Esophagus muscularis mucosa (tissue), 4 donors: ENCODE measurements at regions of chr3 and their contacts with region 1.

Region 1: GRCh38 chr3:141201122-141201521 is 30.5 kb upstream of the PXYLP1 start:
- DNase-seq: peak; percentile 50
- H3K4me3 ChIP-seq: no peak overlapping the region
- H3K27ac ChIP-seq: no peak overlapping the region
- H3K4me1 ChIP-seq: no peaks in the 10 kb centered on the region
- H3K27me3 ChIP-seq: no peaks in the 10 kb centered on the region
- CTCF ChIP-seq: no peak
- EP300 ChIP-seq: no peak
- POLR2A ChIP-seq: no peak

Region 2: GRCh38 chr3:141006344-141006743 is 194.8 kb before region 1 on chr3:
- intact Hi-C with region 1: loop called (anchors 2 kb)
- DNase-seq: no peak
- H3K4me3 ChIP-seq: no peak overlapping the region
- H3K27ac ChIP-seq: no peak overlapping the region
- H3K4me1 ChIP-seq: peaks cover 0 to 4% (median 2%) of the 10 kb centered on the region in 4 donors
- H3K27me3 ChIP-seq: no peaks in the 10 kb centered on the region
- CTCF ChIP-seq: no peak
- EP300 ChIP-seq: no peak
- POLR2A ChIP-seq: no peak

Region 3: DNA sequence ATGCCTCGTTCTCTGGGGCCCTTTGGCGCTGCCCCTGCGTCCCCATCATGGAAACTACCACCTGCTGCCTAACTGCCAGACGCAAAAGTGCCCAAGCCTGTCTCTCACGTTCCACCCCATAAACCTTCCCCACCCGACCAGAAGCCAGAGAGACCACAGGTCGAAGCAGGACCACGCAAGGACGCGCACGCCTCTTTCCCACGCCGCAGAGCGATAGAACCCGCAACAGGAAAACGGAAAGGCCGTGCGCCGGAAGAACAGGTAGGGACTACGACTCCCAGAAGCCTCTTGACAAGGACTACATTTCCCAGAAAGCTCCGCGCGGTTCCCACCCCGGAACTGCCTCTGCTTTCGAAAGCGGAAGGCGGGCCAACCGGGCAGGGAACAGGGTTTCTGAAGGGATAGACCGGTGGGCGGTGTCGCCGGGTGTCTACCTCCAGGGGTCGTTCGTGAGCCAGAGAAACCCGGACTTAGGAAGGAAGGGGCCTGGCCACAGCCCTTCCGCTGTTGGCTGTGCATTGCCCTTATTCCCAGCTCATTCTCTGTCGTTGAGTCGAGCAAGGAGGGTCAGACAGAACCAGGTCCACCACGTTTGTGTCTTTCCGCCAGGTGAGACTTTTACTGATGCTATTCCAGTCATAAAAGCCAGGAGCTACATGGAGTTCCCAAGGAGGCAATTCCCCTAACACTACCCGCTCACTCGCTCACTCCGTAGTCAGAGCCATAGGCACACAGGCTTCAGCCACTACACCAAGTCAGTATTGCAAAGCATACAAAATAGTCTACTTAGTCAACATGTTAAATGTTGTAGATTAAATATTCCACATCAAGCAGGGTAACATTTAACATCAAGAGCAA is 110.6 kb after region 1 on chr3:
- intact Hi-C with region 1: no loop called
- DNase-seq: peak; percentile 99
- H3K4me3 ChIP-seq: peak overlapping the region; percentile 65 to 73 (median 70)
- H3K27ac ChIP-seq: peak overlapping the region; percentile 73 to 82 (median 81)
- H3K4me1 ChIP-seq: peaks cover 6 to 15% (median 15%) of the 10 kb centered on the region in 4 donors
- H3K27me3 ChIP-seq: no peaks in the 10 kb centered on the region
- CTCF ChIP-seq: peak; percentile 57 to 78 (median 71)
- EP300 ChIP-seq: no peak
- POLR2A ChIP-seq: no peak

Region 4: DNA sequence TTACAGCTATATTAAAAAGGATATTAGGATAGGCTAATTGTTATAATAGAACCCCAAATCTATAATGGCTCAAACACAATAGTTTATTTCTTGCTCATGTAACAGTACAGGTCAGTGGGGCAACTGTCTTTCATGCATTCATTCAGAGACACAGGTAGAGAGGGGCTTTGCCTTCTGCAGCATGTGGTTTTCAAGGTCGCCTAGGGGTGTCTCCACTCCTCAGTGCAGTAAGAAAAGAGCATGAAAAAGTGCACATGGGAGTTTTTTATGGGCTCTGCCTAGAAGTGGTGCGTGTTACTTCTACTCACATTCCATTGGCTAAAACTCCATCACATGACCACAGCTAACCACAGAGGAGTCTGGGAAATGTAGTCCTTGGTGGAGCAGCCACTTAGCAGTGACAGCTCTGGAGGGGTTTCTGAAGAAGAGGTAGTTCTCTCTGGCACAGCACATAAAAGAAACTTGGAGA is 169.0 kb after region 1 on chr3:
- intact Hi-C with region 1: no loop called
- DNase-seq: no peak
- H3K4me3 ChIP-seq: no peak overlapping the region
- H3K27ac ChIP-seq: peak overlapping the region; percentile 84 to 88 (median 85)
- H3K4me1 ChIP-seq: peaks cover 28 to 48% (median 44%) of the 10 kb centered on the region in 4 donors
- H3K27me3 ChIP-seq: no peaks in the 10 kb centered on the region
- CTCF ChIP-seq: peak; percentile 48 to 59 (median 49)
- EP300 ChIP-seq: no peak
- POLR2A ChIP-seq: no peak